ENCODE measurements at regions of chr16 and their contacts with region 1.

Region 1: DNA sequence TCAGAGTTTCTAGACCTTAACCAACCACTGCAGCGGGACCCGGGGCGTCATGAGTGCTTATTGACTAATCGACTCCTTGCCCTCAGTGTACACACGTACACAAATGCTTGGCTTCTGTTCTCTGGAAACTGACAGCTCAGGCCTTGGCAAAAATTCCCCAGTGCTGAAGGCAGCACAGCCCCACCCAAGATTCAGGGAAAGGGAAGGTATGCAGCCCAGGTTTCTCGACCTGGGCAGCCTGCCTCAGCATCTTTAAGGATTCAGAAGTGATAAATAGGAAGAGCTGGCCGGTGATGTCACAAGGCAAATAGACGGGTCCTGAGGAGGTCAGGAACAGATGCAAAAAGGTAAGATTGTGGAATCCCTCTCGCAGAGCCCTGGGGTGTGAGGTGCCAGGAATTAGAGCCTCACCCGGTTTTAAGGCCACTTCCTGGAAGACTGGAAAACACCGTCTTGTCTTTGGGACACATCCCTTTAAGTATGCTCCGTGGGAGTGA is 9.0 kb upstream of the CDH3 start:
- DNase-seq: no peak
- ATAC-seq: no peak
- H3K4me3 ChIP-seq: no peak overlapping the region
- H3K27ac ChIP-seq: no peak overlapping the region
- H3K4me1 ChIP-seq: no peaks in the 10 kb centered on the region
- H3K27me3 ChIP-seq: no peaks in the 10 kb centered on the region

Region 2: GRCh38 chr16:68668266-68668665 is 32.2 kb after region 1 on chr16:
- intact Hi-C with region 1: no loop called
- DNase-seq: no peak
- ATAC-seq: no peak
- H3K4me3 ChIP-seq: no peak overlapping the region
- H3K27ac ChIP-seq: no peak overlapping the region
- H3K4me1 ChIP-seq: peaks cover 2% of the 10 kb centered on the region
- H3K27me3 ChIP-seq: no peaks in the 10 kb centered on the region

Region 3: DNA sequence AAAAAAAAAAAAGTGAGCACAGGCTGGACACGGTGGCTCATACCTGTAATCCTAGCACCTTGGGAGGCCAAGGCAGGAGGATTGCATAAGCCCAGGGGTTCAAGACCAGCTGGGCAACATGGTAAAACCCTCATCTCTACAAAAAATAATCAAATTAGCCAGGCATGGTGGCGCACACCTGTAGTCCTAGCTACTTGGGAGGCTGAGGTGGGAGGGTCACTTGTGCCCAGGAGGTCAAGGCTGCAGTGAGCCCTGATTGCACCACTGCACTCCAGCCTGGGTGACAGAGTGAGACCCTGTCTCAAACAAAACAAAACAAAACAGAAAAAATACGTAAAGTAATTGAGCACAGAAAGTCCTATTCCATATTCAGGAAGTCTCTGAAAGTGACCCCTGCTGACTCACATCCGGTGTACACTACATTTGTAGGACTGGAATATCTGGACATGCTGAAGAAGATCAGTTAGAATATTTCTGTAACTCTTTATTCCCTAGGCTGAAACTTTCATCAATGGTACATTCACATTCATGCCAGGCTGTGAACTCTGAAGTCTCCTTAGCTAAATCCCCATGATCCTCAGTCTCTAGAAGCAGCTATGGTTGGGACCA is 403.3 kb after region 1 on chr16:
- intact Hi-C with region 1: loop called in 1 of 4 experiments (anchors 10 kb)
- DNase-seq: no peak
- ATAC-seq: peak in 1 of 2 donors; percentile 34
- H3K4me3 ChIP-seq: no peak overlapping the region
- H3K27ac ChIP-seq: no peak overlapping the region
- H3K4me1 ChIP-seq: no peaks in the 10 kb centered on the region
- H3K27me3 ChIP-seq: no peaks in the 10 kb centered on the region